Endothelial cell of umbilical vein (primary cell): ENCODE measurements at regions of chr1 and their contacts with region 1.

Region 1: DNA sequence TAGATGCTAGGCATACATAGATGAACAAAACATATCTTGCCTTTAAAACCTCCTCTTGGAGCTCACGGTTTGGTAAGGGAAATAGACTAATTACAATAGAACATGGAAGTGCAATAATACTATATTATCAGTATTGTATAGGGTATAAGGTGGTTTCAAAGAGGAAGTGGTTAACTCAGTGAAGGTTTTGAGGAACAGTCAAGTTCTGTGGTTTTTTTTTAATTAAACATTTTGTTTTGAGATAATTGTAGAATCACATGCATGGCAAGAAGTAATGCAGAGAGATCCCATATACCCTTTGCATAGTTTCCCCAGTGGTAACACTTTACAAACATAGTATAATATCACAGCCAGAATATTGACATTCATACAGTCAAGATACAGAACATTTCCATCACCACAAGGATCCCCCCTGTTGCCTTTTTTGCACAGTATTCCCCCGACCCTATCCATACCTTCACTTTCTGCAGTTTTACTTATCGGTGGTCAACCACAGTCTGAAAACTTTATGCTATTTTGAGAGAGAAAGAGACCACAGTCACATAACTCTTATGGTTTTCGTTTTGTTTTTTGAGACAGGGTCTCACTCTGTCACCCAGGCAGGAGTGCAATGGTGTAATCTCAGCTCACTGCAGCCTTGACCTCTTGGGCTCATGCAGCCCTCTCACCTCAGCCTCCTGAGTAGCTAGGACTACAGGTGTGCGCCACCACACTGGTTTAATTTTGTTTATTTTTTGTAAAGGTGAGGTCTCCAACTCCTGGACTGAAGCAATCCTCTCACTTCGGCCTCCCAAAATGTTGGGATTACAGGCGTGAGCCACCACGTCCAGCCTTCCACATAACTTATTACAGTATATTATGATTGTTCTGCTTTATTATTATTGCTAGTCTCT is 60.5 kb upstream of the KIAA1614 start:
- DNase-seq: no peak
- H3K4me3 ChIP-seq: no peak overlapping the region
- H3K27ac ChIP-seq: no peak overlapping the region
- H3K4me1 ChIP-seq: peaks cover 20% of the 10 kb centered on the region
- H3K27me3 ChIP-seq: no peaks in the 10 kb centered on the region
- CTCF ChIP-seq: no peak
- POLR2A ChIP-seq: no peak

Region 2: GRCh38 chr1:180515864-180516388 is 336.3 kb before region 1 on chr1:
- CTCF ChIA-PET with region 1: interaction called, 17 read pairs
- POLR2A ChIA-PET with region 1: no interaction called
- dilution Hi-C with region 1: loop called (anchors 25 kb)
- intact Hi-C with region 1: loop called (anchors 2 kb)
- DNase-seq: peak; percentile 91
- H3K4me3 ChIP-seq: no peak overlapping the region
- H3K27ac ChIP-seq: peak overlapping the region; percentile 52
- H3K4me1 ChIP-seq: peaks cover 29% of the 10 kb centered on the region
- H3K27me3 ChIP-seq: no peaks in the 10 kb centered on the region
- CTCF ChIP-seq: peak; percentile 68 to 73
- POLR2A ChIP-seq: no peak

Region 3: GRCh38 chr1:180533266-180533987 is 318.8 kb before region 1 on chr1:
- CTCF ChIA-PET with region 1: interaction called, 9 read pairs
- POLR2A ChIA-PET with region 1: no interaction called
- dilution Hi-C with region 1: no loop called
- intact Hi-C with region 1: loop called (anchors 2 kb)
- DNase-seq: peak; percentile 66
- H3K4me3 ChIP-seq: no peak overlapping the region
- H3K27ac ChIP-seq: no peak overlapping the region
- H3K4me1 ChIP-seq: peaks cover 20% of the 10 kb centered on the region
- H3K27me3 ChIP-seq: peaks cover 6 to 18% of the 10 kb centered on the region in 2 experiments
- CTCF ChIP-seq: peak; percentile 79 to 88
- POLR2A ChIP-seq: no peak

Region 4: GRCh38 chr1:180631766-180632325 is 220.4 kb before region 1 on chr1 and contains the start of gene XPR1:
- CTCF ChIA-PET with region 1: no interaction called
- POLR2A ChIA-PET with region 1: no interaction called
- dilution Hi-C with region 1: no loop called
- intact Hi-C with region 1: loop called (anchors 2 kb)
- DNase-seq: peak; percentile 99
- H3K4me3 ChIP-seq: peak within 1 kb of the TSS; percentile 71 to 90 (median 87)
- H3K27ac ChIP-seq: peak within 1 kb of the TSS; percentile 34
- H3K4me1 ChIP-seq: peaks cover 13% of the 10 kb centered on the region
- H3K27me3 ChIP-seq: peaks cover 3 to 5% of the 10 kb centered on the region in 2 experiments
- CTCF ChIP-seq: peak in 1 of 2 donors; percentile 26
- POLR2A ChIP-seq: peak; percentile 52
- total RNA-seq, gene XPR1: 26.7 and 29.3 TPM in 2 replicates

Region 5: GRCh38 chr1:180791806-180792205 is 60.4 kb before region 1 on chr1:
- CTCF ChIA-PET with region 1: interaction called, 3 read pairs
- POLR2A ChIA-PET with region 1: interaction called, 4 read pairs
- dilution Hi-C with region 1: no loop called
- intact Hi-C with region 1: loop called (anchors 5 kb)
- DNase-seq: peak; percentile 24
- H3K4me3 ChIP-seq: no peak overlapping the region
- H3K27ac ChIP-seq: no peak overlapping the region
- H3K4me1 ChIP-seq: peaks cover 16% of the 10 kb centered on the region
- H3K27me3 ChIP-seq: no peaks in the 10 kb centered on the region
- CTCF ChIP-seq: no peak
- POLR2A ChIP-seq: no peak

Region 6: GRCh38 chr1:180821970-180822369 is 30.3 kb before region 1 on chr1:
- CTCF ChIA-PET with region 1: interaction called, 15 read pairs
- POLR2A ChIA-PET with region 1: no interaction called
- dilution Hi-C with region 1: no loop called
- intact Hi-C with region 1: no loop called
- DNase-seq: no peak
- H3K4me3 ChIP-seq: no peak overlapping the region
- H3K27ac ChIP-seq: no peak overlapping the region
- H3K4me1 ChIP-seq: no peaks in the 10 kb centered on the region
- H3K27me3 ChIP-seq: no peaks in the 10 kb centered on the region
- CTCF ChIP-seq: no peak
- POLR2A ChIP-seq: no peak

Region 7: DNA sequence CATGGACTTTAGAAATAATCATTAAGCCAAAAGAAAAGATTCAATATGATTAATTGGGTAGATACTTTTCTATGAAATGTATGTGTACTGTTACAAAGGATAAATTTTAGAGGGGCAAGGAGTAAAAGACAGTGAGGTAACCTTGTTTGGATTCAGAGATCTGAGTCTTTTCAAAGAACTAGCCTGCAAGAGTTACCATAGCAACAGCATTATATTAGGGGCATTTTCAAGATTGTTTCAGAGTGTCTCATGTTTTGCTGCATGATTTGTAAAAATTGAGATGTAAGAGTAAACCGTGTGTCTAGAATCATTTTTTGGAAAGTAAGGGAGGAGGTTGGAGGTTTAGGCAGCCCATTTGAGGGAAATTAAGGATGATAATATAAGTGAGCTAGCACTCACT is 10.2 kb before region 1 on chr1:
- CTCF ChIA-PET with region 1: interaction called, 10 read pairs
- POLR2A ChIA-PET with region 1: no interaction called
- dilution Hi-C with region 1: no loop called
- intact Hi-C with region 1: no loop called
- DNase-seq: no peak
- H3K4me3 ChIP-seq: no peak overlapping the region
- H3K27ac ChIP-seq: no peak overlapping the region
- H3K4me1 ChIP-seq: no peaks in the 10 kb centered on the region
- H3K27me3 ChIP-seq: no peaks in the 10 kb centered on the region
- CTCF ChIP-seq: no peak
- POLR2A ChIP-seq: no peak